ENCODE measurements at regions of chr18 and their contacts with region 1.

Region 1: DNA sequence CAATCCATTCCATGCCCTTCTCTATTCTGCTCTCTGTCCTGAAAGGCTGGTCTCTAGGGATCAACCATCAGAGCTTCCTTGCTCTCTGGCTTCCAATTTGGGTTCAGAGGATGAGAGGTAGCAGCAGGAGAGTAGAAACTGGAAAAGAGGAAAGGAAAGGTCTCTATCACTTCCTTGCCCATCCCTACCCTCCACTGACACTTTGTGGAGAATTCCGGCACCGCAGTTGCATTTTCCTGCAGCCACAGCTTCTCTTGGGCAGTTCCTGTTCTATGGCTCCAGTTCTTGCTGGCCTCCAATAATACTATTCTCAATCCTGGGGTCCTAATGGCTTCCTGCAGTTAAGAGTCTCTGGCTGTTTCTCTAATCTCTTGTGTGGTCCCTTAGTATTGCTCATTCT is 13.3 kb upstream of the IMPACT start:
- DNase-seq: no peak
- H3K4me3 Mint-ChIP-seq: no peak overlapping the region
- H3K27ac Mint-ChIP-seq: no peak overlapping the region
- H3K4me1 Mint-ChIP-seq: peaks cover 23% of the 10 kb centered on the region
- H3K27me3 Mint-ChIP-seq: peaks cover 31% of the 10 kb centered on the region

Region 2: GRCh38 chr18:23994361-23994902 is 418.7 kb before region 1 on chr18:
- CTCF ChIA-PET with region 1: no interaction called
- POLR2A ChIA-PET with region 1: no interaction called
- intact Hi-C with region 1: loop called (anchors 5 kb)
- DNase-seq: peak; percentile 64
- H3K4me3 Mint-ChIP-seq: peak overlapping the region; percentile 76
- H3K27ac Mint-ChIP-seq: peak overlapping the region; percentile 86
- H3K4me1 Mint-ChIP-seq: peaks cover 73% of the 10 kb centered on the region
- H3K27me3 Mint-ChIP-seq: no peaks in the 10 kb centered on the region

Region 3: GRCh38 chr18:24362758-24363157 is 50.4 kb before region 1 on chr18:
- CTCF ChIA-PET with region 1: interaction called, 28 read pairs
- POLR2A ChIA-PET with region 1: no interaction called
- intact Hi-C with region 1: no loop called
- DNase-seq: no peak
- H3K4me3 Mint-ChIP-seq: no peak overlapping the region
- H3K27ac Mint-ChIP-seq: no peak overlapping the region
- H3K4me1 Mint-ChIP-seq: no peaks in the 10 kb centered on the region
- H3K27me3 Mint-ChIP-seq: no peaks in the 10 kb centered on the region

Region 4: DNA sequence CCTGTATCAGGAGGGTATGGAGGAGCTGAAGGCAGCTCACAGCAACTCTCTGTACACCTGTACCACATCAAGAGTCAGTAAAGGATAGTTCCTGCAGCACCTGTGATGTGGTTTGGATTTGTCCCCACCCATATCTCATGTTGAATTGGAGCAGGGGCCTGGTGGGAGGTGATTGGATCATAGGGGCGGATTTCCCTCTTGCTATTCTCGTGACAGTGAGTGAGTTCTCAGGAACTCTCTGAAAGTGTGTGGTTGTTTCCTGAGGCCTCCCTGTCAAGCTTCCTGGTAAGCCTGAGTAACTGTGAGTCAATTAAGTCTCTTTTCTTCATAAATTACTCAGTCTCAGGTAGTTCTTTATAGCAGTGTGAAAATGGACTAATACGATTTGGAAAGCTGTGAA is 44.4 kb before region 1 on chr18:
- CTCF ChIA-PET with region 1: no interaction called
- POLR2A ChIA-PET with region 1: interaction called, 22 read pairs
- intact Hi-C with region 1: loop called (anchors 1 kb)
- DNase-seq: peak; percentile 82
- H3K4me3 Mint-ChIP-seq: peak overlapping the region; percentile 6
- H3K27ac Mint-ChIP-seq: peak overlapping the region; percentile 60
- H3K4me1 Mint-ChIP-seq: peaks cover 24% of the 10 kb centered on the region
- H3K27me3 Mint-ChIP-seq: peaks cover 8% of the 10 kb centered on the region

Region 5: GRCh38 chr18:24397694-24398365 is 15.3 kb before region 1 on chr18 and contains the start of gene OSBPL1A:
- CTCF ChIA-PET with region 1: interaction called, 4 read pairs
- POLR2A ChIA-PET with region 1: interaction called, 16 read pairs
- intact Hi-C with region 1: loop called (anchors 1 kb)
- DNase-seq: peak; percentile 86
- H3K4me3 Mint-ChIP-seq: peak within 1 kb of the TSS; percentile 72
- H3K27ac Mint-ChIP-seq: no peak within 1 kb of the TSS
- H3K4me1 Mint-ChIP-seq: peaks cover 23% of the 10 kb centered on the region
- H3K27me3 Mint-ChIP-seq: peaks cover 28% of the 10 kb centered on the region
- total RNA-seq, gene OSBPL1A: 1.4 to 2.4 TPM

Region 6: DNA sequence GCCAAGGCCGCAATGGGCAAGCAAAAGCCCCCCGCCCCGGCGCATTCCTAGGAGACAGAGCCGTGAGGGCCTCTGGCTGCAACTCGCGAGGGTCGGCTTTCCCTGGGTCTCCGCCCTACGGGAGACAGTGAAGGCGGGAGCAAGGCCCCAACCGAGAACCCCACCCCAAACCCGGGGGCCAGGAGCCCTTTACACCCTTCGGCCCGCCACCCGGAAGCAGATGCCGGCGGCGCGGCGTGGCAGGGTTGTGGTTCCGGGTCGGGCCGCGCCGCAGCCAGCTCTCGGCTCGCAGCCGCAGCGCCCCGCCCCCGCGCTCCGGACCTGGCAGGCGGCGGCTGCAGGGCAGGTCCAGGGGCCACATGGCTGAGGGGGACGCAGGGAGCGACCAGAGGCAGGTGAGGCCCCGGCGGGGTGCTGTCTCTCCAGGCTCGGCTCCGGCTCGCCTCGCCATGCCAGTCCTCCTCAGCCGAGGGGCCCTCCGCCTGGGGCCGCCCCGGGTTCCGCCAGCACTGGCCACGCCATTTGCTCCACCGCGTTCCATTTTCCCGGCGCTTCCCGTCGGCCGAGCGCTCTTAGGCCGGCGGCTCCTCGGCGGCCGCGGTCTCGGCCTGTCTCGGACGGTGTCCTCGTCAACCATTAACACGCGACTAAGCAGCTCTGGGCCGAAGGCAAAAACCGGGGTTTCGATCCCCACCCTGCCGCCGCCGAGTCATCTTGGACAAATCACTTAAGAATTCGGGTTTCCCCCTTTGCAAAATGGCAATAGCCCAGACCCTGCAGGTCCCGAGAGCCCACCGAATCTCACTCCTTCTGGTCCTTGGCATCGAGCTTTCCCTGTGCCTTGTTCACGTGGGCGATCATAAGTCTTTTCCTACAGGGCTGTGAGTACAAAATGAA is 13.5 kb after region 1 on chr18 and contains the start of gene IMPACT:
- CTCF ChIA-PET with region 1: no interaction called
- POLR2A ChIA-PET with region 1: interaction called, 5 read pairs
- intact Hi-C with region 1: loop called (anchors 1 kb)
- DNase-seq: peak; percentile 81
- H3K4me3 Mint-ChIP-seq: peak within 1 kb of the TSS; percentile 88
- H3K27ac Mint-ChIP-seq: peak within 1 kb of the TSS; percentile 90
- H3K4me1 Mint-ChIP-seq: peaks cover 18% of the 10 kb centered on the region
- H3K27me3 Mint-ChIP-seq: peaks cover 10% of the 10 kb centered on the region
- total RNA-seq, gene IMPACT: 13.7 to 15.9 TPM

Region 7: DNA sequence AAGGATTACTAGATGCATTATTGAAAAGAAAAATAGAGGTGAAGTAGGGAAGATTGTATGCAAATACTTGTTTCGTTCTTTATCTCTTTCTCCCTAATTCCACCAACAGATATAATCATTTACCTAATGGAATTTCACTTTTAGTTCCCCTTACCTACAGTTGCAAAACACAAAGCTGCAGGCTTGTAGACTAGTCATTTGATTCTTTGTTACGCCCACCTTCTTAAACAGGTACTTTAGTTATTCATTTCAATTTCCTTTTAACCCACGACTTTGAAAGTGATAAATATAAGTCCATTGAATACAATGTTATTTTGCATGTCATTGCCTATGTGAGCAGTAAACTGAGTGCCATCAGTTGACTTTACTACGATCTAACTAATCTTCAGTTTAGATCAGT is 43.4 kb after region 1 on chr18:
- CTCF ChIA-PET with region 1: no interaction called
- POLR2A ChIA-PET with region 1: no interaction called
- intact Hi-C with region 1: loop called (anchors 2 kb)
- DNase-seq: no peak
- H3K4me3 Mint-ChIP-seq: no peak overlapping the region
- H3K27ac Mint-ChIP-seq: no peak overlapping the region
- H3K4me1 Mint-ChIP-seq: peaks cover 19% of the 10 kb centered on the region
- H3K27me3 Mint-ChIP-seq: no peaks in the 10 kb centered on the region

Region 8: DNA sequence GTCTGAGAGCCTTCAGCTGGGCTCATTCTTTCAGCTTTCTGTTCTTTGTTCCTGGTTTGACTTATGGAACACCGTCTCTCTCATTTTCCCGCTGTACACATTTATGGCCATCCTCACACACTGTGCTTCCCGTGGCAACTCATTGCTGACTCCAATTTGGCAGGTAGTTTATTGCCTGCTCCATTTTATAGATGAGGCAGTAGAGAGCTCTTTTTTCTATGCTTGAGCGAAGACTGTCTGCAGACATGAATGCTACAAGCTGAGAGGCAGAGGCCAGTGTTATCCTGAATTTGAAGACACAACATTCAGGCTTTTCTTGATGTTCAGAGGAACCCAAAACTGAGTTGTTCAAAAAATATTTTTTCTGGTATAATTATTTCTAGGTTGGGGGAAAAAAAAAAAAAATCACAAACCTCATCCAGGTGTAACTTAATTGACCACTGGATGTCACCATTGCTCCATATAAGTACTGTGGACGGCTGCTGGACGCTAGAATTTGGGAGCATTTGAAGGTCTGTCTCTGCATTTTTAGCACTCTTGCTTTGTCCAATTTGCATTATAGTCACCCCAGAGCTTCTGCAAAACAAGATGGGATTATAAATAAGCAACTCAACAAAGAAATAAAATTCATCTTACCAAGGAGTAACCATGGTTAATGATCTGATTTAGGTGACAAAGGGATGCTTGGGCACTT is 130.8 kb after region 1 on chr18:
- CTCF ChIA-PET with region 1: no interaction called
- POLR2A ChIA-PET with region 1: no interaction called
- intact Hi-C with region 1: no loop called
- DNase-seq: no peak
- H3K4me3 Mint-ChIP-seq: no peak overlapping the region
- H3K27ac Mint-ChIP-seq: no peak overlapping the region
- H3K4me1 Mint-ChIP-seq: no peaks in the 10 kb centered on the region
- H3K27me3 Mint-ChIP-seq: peaks cover 5% of the 10 kb centered on the region